IMR-90 (cell line): ENCODE measurements at regions of chr3 and their contacts with region 1.

Region 1: GRCh38 chr3:107235928-107236315 is 141.3 kb upstream of the CCDC54 start:
- DNase-seq: peak; percentile 89
- ATAC-seq: peak; percentile 77
- H3K4me3 ChIP-seq: peak overlapping the region; percentile 40
- H3K27ac ChIP-seq: peak overlapping the region; percentile 19; the same call in 1 of the 2 replicates
- H3K4me1 ChIP-seq: peaks cover 5% of the 10 kb centered on the region
- H3K27me3 ChIP-seq: no peaks in the 10 kb centered on the region
- CTCF ChIP-seq: peak; percentile 94
- POLR2A ChIP-seq: no peak
- RAD21 ChIP-seq: peak; percentile 92

Region 2: GRCh38 chr3:107082527-107082926 is 153.4 kb before region 1 on chr3:
- CTCF ChIA-PET with region 1: no interaction called
- POLR2A ChIA-PET with region 1: no interaction called
- dilution Hi-C with region 1: no loop called
- in situ Hi-C with region 1: no loop called
- intact Hi-C with region 1: no loop called
- DNase-seq: peak; percentile 73
- ATAC-seq: peak; percentile 42; the same call in 1 of the 2 replicates
- H3K4me3 ChIP-seq: no peak overlapping the region
- H3K27ac ChIP-seq: no peak overlapping the region
- H3K4me1 ChIP-seq: peaks cover 2% of the 10 kb centered on the region; the same call in 1 of the 2 replicates
- H3K27me3 ChIP-seq: no peaks in the 10 kb centered on the region
- CTCF ChIP-seq: no peak
- POLR2A ChIP-seq: no peak
- RAD21 ChIP-seq: no peak

Region 3: DNA sequence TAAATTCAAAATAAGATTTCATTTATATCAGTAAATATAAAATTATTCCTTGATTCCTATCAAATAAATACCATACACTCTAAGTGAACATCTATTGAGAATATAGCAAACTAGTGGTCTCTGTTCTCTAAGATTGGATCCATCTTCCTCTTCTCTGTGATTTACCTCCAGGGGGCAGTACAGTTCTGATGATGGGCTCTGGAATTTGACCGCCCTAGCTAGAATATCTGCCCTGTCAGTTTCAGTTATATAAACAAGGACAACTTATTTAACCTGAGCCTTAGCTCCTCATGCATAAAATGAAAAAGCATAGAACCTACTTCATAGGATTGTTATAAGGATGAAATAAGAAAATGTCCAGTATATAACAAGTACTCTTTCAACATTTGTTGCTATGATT is 29.8 kb before region 1 on chr3:
- CTCF ChIA-PET with region 1: interaction called, 3 read pairs
- POLR2A ChIA-PET with region 1: no interaction called
- dilution Hi-C with region 1: no loop called
- in situ Hi-C with region 1: no loop called
- intact Hi-C with region 1: loop called (anchors 1 kb)
- DNase-seq: peak; percentile 59
- ATAC-seq: 0 out of 2 replicates have a peak, but pooled peaks have one; percentile 20
- H3K4me3 ChIP-seq: no peak overlapping the region
- H3K27ac ChIP-seq: no peak overlapping the region
- H3K4me1 ChIP-seq: peaks cover 18% of the 10 kb centered on the region
- H3K27me3 ChIP-seq: no peaks in the 10 kb centered on the region
- CTCF ChIP-seq: peak; percentile 64
- POLR2A ChIP-seq: no peak
- RAD21 ChIP-seq: peak; percentile 69

Region 4: GRCh38 chr3:107522510-107523288 is 286.8 kb after region 1 on chr3 and contains the start of gene BBX:
- CTCF ChIA-PET with region 1: no interaction called
- POLR2A ChIA-PET with region 1: no interaction called
- dilution Hi-C with region 1: no loop called
- in situ Hi-C with region 1: no loop called
- intact Hi-C with region 1: loop called (anchors 1 kb)
- DNase-seq: peak; percentile 97
- ATAC-seq: peak; percentile 88
- H3K4me3 ChIP-seq: peak within 1 kb of the TSS; percentile 87
- H3K27ac ChIP-seq: peak within 1 kb of the TSS; percentile 91
- H3K4me1 ChIP-seq: no peaks in the 10 kb centered on the region
- H3K27me3 ChIP-seq: no peaks in the 10 kb centered on the region; the same call in 1 of the 2 replicates
- CTCF ChIP-seq: no peak
- POLR2A ChIP-seq: no peak
- RAD21 ChIP-seq: no peak
- total RNA-seq, gene BBX: 87.5 and 107 TPM in 2 replicates

Region 5: DNA sequence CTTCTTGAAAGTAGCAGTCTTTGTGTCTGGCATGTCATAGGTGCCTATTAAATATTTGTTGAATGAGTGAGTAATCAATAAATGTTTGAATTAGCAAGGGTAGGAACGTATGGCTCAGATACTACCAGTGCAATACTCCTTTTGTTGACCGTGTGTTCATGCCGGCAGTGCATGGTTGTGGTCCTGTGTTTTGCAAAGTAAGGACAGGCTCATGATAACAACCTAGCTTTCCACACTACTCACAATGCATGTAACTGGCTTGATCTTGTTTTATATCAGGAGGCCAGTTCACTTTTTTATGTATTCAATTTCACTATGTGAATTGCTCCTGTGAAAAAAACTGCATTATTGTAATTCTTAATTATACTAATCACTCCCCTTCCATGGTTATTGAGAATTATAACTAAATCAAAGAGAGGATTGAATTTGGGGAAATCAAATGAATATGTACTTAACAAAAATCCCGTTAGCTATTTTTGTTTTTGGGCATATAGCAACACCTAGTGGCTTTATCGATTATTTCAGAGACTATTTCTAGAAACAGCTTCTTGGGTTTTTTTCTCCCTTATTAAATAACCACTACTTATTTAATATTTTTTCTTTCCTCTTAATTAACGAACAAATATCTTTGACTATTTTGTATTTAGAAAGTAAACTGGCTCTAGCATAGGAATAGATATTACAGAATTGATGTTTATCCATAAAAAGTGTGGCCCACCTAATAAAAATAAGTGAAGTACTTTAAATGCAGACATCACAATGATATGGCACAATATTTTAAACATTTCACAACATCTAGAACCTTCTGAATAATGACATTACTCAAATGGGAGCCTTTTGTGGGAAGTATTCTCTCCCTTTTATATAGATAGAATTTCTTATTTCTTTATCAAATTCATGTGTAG is 505.3 kb after region 1 on chr3:
- CTCF ChIA-PET with region 1: no interaction called
- POLR2A ChIA-PET with region 1: no interaction called
- dilution Hi-C with region 1: no loop called
- in situ Hi-C with region 1: loop called (anchors 10 kb)
- intact Hi-C with region 1: loop called (anchors 2 kb)
- DNase-seq: peak; percentile 45
- ATAC-seq: 0 out of 2 replicates have a peak, but pooled peaks have one; percentile 32
- H3K4me3 ChIP-seq: no peak overlapping the region
- H3K27ac ChIP-seq: no peak overlapping the region
- H3K4me1 ChIP-seq: no peaks in the 10 kb centered on the region
- H3K27me3 ChIP-seq: no peaks in the 10 kb centered on the region
- CTCF ChIP-seq: peak; percentile 67
- POLR2A ChIP-seq: no peak
- RAD21 ChIP-seq: peak; percentile 66

Region 6: DNA sequence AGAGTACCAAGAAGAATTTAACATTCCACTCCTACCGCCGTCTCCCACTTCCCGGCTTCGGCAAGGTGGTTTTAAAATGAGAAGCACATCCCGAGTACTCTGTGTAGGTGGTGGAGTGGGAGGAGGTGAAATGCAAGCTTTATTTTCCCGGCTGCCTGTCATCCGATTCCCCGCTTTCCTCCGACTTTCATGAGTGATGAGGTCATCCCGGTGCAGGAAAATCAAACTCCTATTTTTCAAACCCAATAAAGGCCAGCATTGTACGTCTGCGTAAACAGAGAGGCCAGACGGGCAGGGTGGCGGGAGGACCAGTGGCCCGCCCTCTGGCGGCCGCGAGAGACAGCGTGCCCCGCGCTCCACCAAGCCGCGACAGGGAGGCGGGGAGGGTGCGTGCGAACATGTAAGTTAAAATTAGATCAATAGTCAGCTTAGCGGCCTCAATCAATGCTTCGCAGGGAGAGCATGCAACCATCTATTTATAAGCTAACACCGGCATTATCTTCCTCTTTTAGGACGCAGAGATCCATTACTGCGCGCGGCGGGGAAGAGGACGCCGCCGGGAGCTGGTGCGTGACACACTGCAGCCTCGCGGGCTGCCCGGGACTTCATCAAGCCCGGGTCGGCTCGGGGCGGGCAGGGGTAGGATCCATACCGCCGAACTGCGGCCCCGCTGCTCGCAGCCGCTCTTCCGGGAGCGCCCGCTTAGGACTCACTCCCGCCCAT is 691.6 kb after region 1 on chr3:
- CTCF ChIA-PET with region 1: interaction called, 5 read pairs
- POLR2A ChIA-PET with region 1: no interaction called
- dilution Hi-C with region 1: no loop called
- in situ Hi-C with region 1: loop called (anchors 10 kb)
- intact Hi-C with region 1: loop called (anchors 1 kb)
- DNase-seq: peak; percentile 67
- ATAC-seq: peak; percentile 100
- H3K4me3 ChIP-seq: peak overlapping the region; percentile 55
- H3K27ac ChIP-seq: no peak overlapping the region
- H3K4me1 ChIP-seq: no peaks in the 10 kb centered on the region
- H3K27me3 ChIP-seq: peaks cover 8% of the 10 kb centered on the region
- CTCF ChIP-seq: peak; percentile 80
- POLR2A ChIP-seq: no peak
- RAD21 ChIP-seq: peak; percentile 64

Region 7: DNA sequence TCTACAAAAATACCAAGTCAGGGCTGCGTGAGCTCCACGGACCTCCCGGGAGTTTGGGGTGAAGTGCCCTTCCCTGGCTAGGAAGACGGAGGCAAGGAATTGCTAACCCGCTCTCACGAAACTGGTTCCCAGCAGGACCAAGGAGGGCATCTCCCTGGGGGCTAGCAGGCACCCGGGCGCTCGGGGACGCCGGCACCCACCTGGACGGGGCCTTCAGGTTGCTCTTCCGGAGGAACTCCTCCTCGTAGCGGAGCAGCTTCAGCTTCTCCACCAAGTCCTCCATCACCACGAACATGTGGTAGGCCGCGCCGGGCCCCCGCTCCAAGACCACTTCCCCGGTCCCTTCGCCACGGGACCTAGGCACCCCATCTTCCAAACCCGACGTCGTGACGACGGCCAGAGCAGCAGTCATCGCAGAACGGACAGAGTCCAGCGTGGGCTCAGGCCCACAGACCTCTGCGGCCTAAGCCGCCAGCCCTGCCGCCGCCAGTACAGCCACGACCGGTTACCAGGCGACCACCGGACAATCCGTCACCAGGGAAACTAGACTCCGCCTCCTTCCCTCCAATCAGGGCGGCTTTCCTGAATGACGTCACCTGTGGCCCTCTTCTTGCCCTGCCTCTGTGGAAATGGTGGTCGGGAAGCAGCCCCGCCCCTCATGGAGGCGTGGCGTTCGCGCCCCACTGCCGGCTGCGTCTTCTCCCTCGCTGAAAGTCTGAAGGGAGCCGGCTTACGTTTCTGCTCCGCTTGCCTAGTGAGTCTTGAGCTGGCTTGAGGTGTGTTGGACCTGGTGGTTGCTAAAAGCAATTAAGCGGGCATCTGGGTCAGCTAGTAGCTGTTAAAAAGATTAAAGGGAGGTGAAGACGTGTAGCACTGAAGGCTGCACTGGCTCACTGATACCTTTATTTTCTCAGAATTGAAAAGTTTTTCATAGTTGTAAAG is 986.3 kb after region 1 on chr3 and contains the start of gene IFT57:
- CTCF ChIA-PET with region 1: no interaction called
- POLR2A ChIA-PET with region 1: no interaction called
- dilution Hi-C with region 1: no loop called
- in situ Hi-C with region 1: loop called (anchors 25 kb)
- intact Hi-C with region 1: no loop called
- DNase-seq: peak; percentile 98
- ATAC-seq: peak; percentile 96
- H3K4me3 ChIP-seq: peak within 1 kb of the TSS; percentile 84
- H3K27ac ChIP-seq: peak within 1 kb of the TSS; percentile 50
- H3K4me1 ChIP-seq: peaks cover 8% of the 10 kb centered on the region
- H3K27me3 ChIP-seq: no peaks in the 10 kb centered on the region
- CTCF ChIP-seq: no peak
- POLR2A ChIP-seq: peak; percentile 92
- RAD21 ChIP-seq: no peak
- total RNA-seq, gene IFT57: 35.3 and 46.9 TPM in 2 replicates

Region 8: GRCh38 chr3:108552267-108553159 is 1316.6 kb after region 1 on chr3:
- CTCF ChIA-PET with region 1: no interaction called
- POLR2A ChIA-PET with region 1: no interaction called
- dilution Hi-C with region 1: no loop called
- in situ Hi-C with region 1: loop called (anchors 10 kb)
- intact Hi-C with region 1: loop called (anchors 5 kb)
- DNase-seq: peak; percentile 56
- ATAC-seq: peak; percentile 59; the same call in 1 of the 2 replicates
- H3K4me3 ChIP-seq: no peak overlapping the region
- H3K27ac ChIP-seq: no peak overlapping the region
- H3K4me1 ChIP-seq: peaks cover 4% of the 10 kb centered on the region; the same call in 1 of the 2 replicates
- H3K27me3 ChIP-seq: no peaks in the 10 kb centered on the region
- CTCF ChIP-seq: peak; percentile 60
- POLR2A ChIP-seq: no peak
- RAD21 ChIP-seq: peak; percentile 53